ENCODE measurements at regions of chr5 and their contacts with region 1.

Region 1: DNA sequence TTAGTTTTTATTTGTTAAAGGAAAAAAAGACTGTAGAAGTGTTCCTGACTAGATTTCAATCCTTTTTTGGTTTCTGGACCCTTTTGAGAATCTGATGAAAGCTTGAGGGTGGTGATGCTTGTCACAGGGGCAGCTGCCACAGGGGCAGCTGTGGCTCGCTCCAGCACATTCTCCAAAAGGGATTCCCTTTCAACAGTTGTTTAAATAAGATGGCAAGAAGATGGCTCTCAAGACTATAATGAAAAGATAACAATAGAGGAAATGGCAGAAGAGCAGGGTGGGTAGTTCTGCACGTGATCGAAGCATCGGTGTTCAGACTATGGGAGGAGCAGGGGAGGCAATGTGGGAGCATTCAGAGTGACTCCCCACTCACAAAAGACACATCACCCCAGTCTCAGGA is 46.5 kb upstream of the TNFAIP8 start:
- DNase-seq: no peak
- ATAC-seq: no peak
- H3K4me3 Mint-ChIP-seq: peak overlapping the region; percentile 73
- H3K27ac Mint-ChIP-seq: peak overlapping the region; percentile 92
- H3K4me1 Mint-ChIP-seq: peaks cover 94% of the 10 kb centered on the region
- H3K27me3 Mint-ChIP-seq: no peaks in the 10 kb centered on the region
- CTCF ChIP-seq: no peak

Region 2: DNA sequence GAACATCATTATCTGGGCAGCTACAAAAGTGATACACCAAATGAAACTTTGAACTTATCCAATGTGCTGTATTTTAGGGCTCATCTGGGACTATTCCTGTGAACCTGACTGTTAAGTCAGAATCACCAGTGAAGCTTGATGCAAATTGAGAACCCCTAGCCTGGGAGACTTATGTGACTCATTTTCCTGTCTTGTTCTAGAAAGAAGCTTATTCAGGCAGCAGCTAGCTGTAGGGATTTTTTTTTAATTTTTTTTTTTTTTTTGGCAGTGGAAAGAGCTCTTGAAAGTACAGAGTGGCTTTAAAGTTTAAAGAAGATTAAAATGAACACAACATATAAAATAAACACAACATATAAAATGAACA is 34.6 kb before region 1 on chr5:
- CTCF ChIA-PET with region 1: interaction called, 20 read pairs
- POLR2A ChIA-PET with region 1: interaction called, 8 read pairs
- intact Hi-C with region 1: loop called (anchors 2 kb)
- DNase-seq: no peak
- ATAC-seq: peak; percentile 42
- H3K4me3 Mint-ChIP-seq: peak overlapping the region; percentile 78
- H3K27ac Mint-ChIP-seq: peak overlapping the region; percentile 89
- H3K4me1 Mint-ChIP-seq: peaks cover 97% of the 10 kb centered on the region
- H3K27me3 Mint-ChIP-seq: no peaks in the 10 kb centered on the region
- CTCF ChIP-seq: no peak

Region 3: DNA sequence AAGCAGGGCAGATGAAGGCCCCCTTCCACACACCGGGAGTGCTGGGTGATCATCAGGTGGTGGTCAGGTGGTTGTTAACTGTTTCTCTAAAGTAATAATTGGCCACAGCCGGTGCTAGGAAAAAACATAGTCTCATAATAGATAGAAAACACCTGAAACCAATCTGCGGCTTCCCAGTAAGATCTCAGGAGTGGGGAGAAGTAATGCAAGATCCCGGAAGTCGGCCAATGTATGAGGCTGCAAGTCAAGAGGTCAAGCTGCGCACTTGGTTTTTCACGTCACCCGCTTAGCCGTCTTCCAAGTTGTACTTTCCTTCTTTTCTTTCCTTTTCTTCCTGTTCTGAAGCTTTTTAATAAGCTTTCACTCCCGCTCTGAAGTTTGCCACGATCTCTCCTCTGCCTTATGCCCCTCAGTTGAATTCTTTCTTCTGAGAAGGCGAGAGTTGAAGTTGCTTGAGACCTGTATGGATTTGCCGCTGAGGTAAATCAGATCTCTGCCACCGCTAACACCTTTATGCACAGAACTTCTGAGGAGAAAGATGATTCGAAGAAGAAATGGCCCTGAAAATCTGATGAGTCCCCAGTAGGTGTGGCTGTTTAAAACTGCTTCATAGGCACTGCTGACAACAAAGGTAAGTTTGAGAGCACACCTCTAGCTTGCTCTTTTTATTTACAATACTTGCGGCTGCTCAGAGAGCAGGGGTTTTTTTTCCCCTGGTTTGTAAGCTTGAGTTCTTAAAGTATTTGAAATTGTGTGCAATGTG is 726.7 kb after region 1 on chr5:
- CTCF ChIA-PET with region 1: no interaction called
- POLR2A ChIA-PET with region 1: no interaction called
- intact Hi-C with region 1: no loop called
- DNase-seq: no peak
- ATAC-seq: no peak
- H3K4me3 Mint-ChIP-seq: no peak overlapping the region
- H3K27ac Mint-ChIP-seq: no peak overlapping the region
- H3K4me1 Mint-ChIP-seq: no peaks in the 10 kb centered on the region
- H3K27me3 Mint-ChIP-seq: no peaks in the 10 kb centered on the region
- CTCF ChIP-seq: no peak